ENCODE measurements at regions of chr11 and their contacts with region 1.

Region 1: GRCh38 chr11:10307442-10308207 is 2.8 kb downstream of the ADM start:
- DNase-seq: peak; percentile 83 to 88
- ATAC-seq: peak; percentile 33 to 41
- H3K4me3 ChIP-seq: peak overlapping the region; percentile 77 to 92 (median 88)
- H3K27ac ChIP-seq: peak overlapping the region; percentile 85 to 93 (median 89)
- H3K4me1 ChIP-seq: peaks cover 46 to 60% of the 10 kb centered on the region in 2 donors
- H3K27me3 ChIP-seq: peaks cover 0 to 5% (median 0%) of the 10 kb centered on the region in 3 donors
- CTCF ChIP-seq: peak; percentile 100
- POLR2A ChIP-seq: peak; percentile 29 to 41

Region 2: GRCh38 chr11:9802291-9802861 is 505.2 kb before region 1 on chr11:
- in situ Hi-C with region 1: no loop called
- intact Hi-C with region 1: loop called (anchors 5 kb)
- DNase-seq: peak in 1 of 2 donors; percentile 25
- ATAC-seq: peak; percentile 96 to 97
- H3K4me3 ChIP-seq: no peak overlapping the region
- H3K27ac ChIP-seq: peak overlapping the region; percentile 72 to 80 (median 76)
- H3K4me1 ChIP-seq: peaks cover 31 to 38% of the 10 kb centered on the region in 2 donors
- H3K27me3 ChIP-seq: no peaks in the 10 kb centered on the region
- CTCF ChIP-seq: no peak
- POLR2A ChIP-seq: no peak

Region 3: GRCh38 chr11:9982800-9983579 is 324.6 kb before region 1 on chr11:
- in situ Hi-C with region 1: loop called in 3 of 4 experiments (anchors 25 kb)
- intact Hi-C with region 1: no loop called
- DNase-seq: no peak
- ATAC-seq: no peak
- H3K4me3 ChIP-seq: no peak overlapping the region
- H3K27ac ChIP-seq: no peak overlapping the region
- H3K4me1 ChIP-seq: no peaks in the 10 kb centered on the region
- H3K27me3 ChIP-seq: no peaks in the 10 kb centered on the region
- CTCF ChIP-seq: no peak
- POLR2A ChIP-seq: no peak

Region 4: GRCh38 chr11:10293423-10294289 is 14.0 kb before region 1 on chr11 and contains the start of gene SBF2:
- in situ Hi-C with region 1: no loop called
- intact Hi-C with region 1: loop called (anchors 1 kb)
- DNase-seq: peak; percentile 72 to 79
- ATAC-seq: peak; percentile 89 to 91
- H3K4me3 ChIP-seq: peak within 1 kb of the TSS; percentile 73 to 98 (median 85)
- H3K27ac ChIP-seq: peak within 1 kb of the TSS; percentile 90 to 98 (median 92)
- H3K4me1 ChIP-seq: peaks cover 20 to 22% of the 10 kb centered on the region in 2 donors
- H3K27me3 ChIP-seq: no peaks in the 10 kb centered on the region
- CTCF ChIP-seq: peak in 1 of 5 experiments; percentile 13
- POLR2A ChIP-seq: peak; percentile 70 to 82
- total RNA-seq, gene SBF2: 19.3 to 28.1 (median 25.8) TPM

Region 5: DNA sequence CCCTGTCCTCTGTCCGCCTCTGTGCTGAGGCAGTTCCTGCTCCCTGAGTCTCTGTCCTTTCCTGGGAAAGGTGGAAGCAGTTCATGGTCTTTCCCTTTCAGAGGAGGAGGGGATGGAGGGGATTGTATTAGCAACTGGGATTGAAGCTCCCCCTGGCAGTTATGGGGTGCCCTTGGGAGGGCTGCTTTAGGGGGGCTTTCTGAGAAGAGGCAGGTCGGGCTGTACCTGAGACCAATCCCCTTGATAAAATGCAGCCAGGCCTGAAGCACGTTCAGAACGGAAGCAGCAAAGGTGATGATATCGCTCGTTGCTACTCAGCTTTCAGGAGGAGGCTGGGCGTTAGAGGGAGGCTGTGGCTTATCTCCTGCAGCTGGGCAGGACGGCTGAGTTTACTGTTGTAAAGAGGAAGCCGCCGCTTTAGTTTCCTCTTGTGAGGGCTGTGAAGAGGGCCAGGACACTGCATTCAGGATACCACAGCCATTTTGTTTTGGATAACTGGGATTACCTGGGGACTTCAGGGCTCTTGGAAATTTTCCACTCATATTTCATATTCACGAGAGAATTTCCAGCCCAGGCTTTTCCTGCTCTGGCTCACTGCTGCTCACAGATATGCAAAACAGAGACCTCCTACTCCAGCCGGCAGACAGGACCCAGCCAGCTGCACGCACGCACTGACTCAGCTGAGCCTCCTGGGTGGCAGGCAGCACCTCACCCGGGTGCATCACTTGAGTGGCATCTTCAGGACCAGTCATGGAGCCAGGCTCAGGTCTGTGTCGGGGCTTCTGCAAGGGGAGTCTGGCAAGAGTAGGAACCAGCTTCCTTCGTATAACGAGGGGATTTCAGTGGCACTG is 148.2 kb after region 1 on chr11:
- in situ Hi-C with region 1: no loop called
- intact Hi-C with region 1: loop called (anchors 2 kb)
- DNase-seq: peak; percentile 57
- ATAC-seq: peak; percentile 9 to 27
- H3K4me3 ChIP-seq: peak overlapping the region; percentile 76 to 84 (median 78)
- H3K27ac ChIP-seq: peak overlapping the region; percentile 94 to 100 (median 98)
- H3K4me1 ChIP-seq: peaks cover 51 to 56% of the 10 kb centered on the region in 2 donors
- H3K27me3 ChIP-seq: no peaks in the 10 kb centered on the region
- CTCF ChIP-seq: no peak
- POLR2A ChIP-seq: peak; percentile 84 to 87

Measured in gastrocnemius medialis (tissue), 4 donors.